T-cell (primary cell): ENCODE measurements at regions of chr13 and their contacts with region 1.

Region 1: GRCh38 chr13:74168263-74168675 is 34.1 kb upstream of the KLF12 start:
- DNase-seq: no peak
- ATAC-seq: no peak
- H3K4me3 ChIP-seq: no peak overlapping the region
- H3K4me3 Mint-ChIP-seq: no peak overlapping the region
- H3K27ac ChIP-seq: no peak overlapping the region
- H3K27ac Mint-ChIP-seq: no peak overlapping the region
- H3K4me1 ChIP-seq: no peaks in the 10 kb centered on the region
- H3K4me1 Mint-ChIP-seq: no peaks in the 10 kb centered on the region
- H3K27me3 ChIP-seq: no peaks in the 10 kb centered on the region
- H3K27me3 Mint-ChIP-seq: peaks cover 0 to 3% of the 10 kb centered on the region in 2 donors

Region 2: GRCh38 chr13:74082741-74083160 is 85.5 kb before region 1 on chr13:
- CTCF ChIA-PET with region 1: no interaction called
- POLR2A ChIA-PET with region 1: interaction called in 1 of 2 experiments, 10 read pairs
- DNase-seq: no peak
- ATAC-seq: no peak
- H3K4me3 ChIP-seq: no peak overlapping the region
- H3K4me3 Mint-ChIP-seq: peak overlapping the region in 1 of 3 donors; percentile 35
- H3K27ac ChIP-seq: no peak overlapping the region
- H3K27ac Mint-ChIP-seq: peak overlapping the region; percentile 29 to 33
- H3K4me1 ChIP-seq: peaks cover 10 to 12% of the 10 kb centered on the region in 2 experiments
- H3K4me1 Mint-ChIP-seq: peaks cover 68 to 80% (median 75%) of the 10 kb centered on the region in 3 donors
- H3K27me3 ChIP-seq: no peaks in the 10 kb centered on the region
- H3K27me3 Mint-ChIP-seq: no peaks in the 10 kb centered on the region

Region 3: DNA sequence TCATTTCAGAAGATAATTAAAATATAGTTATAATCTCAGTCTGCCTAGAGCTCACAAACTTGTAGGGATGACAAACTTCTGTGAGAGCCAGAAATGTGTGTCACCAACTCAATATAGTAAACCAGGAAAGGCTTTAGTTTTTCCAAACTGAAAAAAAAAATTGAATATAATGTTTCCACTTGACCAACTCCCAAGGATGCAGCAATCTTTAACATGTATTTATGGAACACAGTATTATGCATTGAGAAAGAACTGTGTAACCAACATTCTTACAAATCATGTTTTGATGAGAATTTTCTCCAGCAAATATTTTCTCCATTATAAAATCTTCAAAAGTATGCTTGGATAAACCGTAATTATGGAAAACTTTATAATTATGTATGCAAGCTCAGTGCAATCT is 16.0 kb after region 1 on chr13:
- CTCF ChIA-PET with region 1: no interaction called
- POLR2A ChIA-PET with region 1: no interaction called
- DNase-seq: no peak
- ATAC-seq: no peak
- H3K4me3 ChIP-seq: no peak overlapping the region
- H3K4me3 Mint-ChIP-seq: no peak overlapping the region
- H3K27ac ChIP-seq: no peak overlapping the region
- H3K27ac Mint-ChIP-seq: no peak overlapping the region
- H3K4me1 ChIP-seq: no peaks in the 10 kb centered on the region
- H3K4me1 Mint-ChIP-seq: no peaks in the 10 kb centered on the region
- H3K27me3 ChIP-seq: no peaks in the 10 kb centered on the region
- H3K27me3 Mint-ChIP-seq: no peaks in the 10 kb centered on the region

Region 4: GRCh38 chr13:74197677-74198429 is 29.6 kb after region 1 on chr13:
- CTCF ChIA-PET with region 1: no interaction called
- POLR2A ChIA-PET with region 1: no interaction called
- DNase-seq: no peak
- ATAC-seq: no peak
- H3K4me3 ChIP-seq: no peak overlapping the region
- H3K4me3 Mint-ChIP-seq: no peak overlapping the region
- H3K27ac ChIP-seq: no peak overlapping the region
- H3K27ac Mint-ChIP-seq: no peak overlapping the region
- H3K4me1 ChIP-seq: peaks cover 0 to 4% of the 10 kb centered on the region in 2 experiments
- H3K4me1 Mint-ChIP-seq: peaks cover 20 to 22% (median 22%) of the 10 kb centered on the region in 3 donors
- H3K27me3 ChIP-seq: no peaks in the 10 kb centered on the region
- H3K27me3 Mint-ChIP-seq: no peaks in the 10 kb centered on the region